GM10248 (cell line): ENCODE measurements at regions of chr1 and their contacts with region 1.

Region 1: GRCh38 chr1:33055210-33056008 is 18.7 kb upstream of the AK2 start:
- DNase-seq: peak; percentile 67
- CTCF ChIP-seq: peak; percentile 64

Region 2: GRCh38 chr1:32947669-32948389 is 107.6 kb before region 1 on chr1:
- CTCF ChIA-PET with region 1: interaction called, 20 read pairs
- POLR2A ChIA-PET with region 1: no interaction called
- DNase-seq: no peak
- CTCF ChIP-seq: no peak

Region 3: GRCh38 chr1:32977531-32978087 is 77.8 kb before region 1 on chr1:
- CTCF ChIA-PET with region 1: no interaction called
- POLR2A ChIA-PET with region 1: no interaction called
- DNase-seq: no peak
- CTCF ChIP-seq: no peak

Region 4: GRCh38 chr1:33030575-33030974 is 24.8 kb before region 1 on chr1:
- CTCF ChIA-PET with region 1: interaction called, 11 read pairs
- POLR2A ChIA-PET with region 1: no interaction called
- DNase-seq: no peak
- CTCF ChIP-seq: no peak

Region 5: DNA sequence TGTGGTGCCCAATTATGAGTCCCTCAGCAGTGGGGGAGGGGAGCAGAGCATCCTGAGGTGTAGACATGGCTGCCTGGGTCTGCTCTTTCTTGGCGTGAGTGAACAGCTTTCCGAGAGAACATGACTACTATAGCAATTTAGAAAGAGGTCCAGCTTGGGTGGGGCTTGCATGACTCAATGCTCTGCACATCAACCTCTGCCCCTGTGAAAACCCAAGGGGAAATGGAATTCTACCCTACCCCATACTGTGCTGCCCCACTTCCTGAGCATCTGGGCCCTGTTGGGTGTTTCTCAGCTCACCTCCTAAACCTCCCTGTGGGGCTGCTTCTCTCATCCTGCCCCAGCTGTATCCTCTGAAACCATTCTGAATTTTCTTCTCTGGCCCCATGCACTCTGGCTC is 17.3 kb after region 1 on chr1:
- CTCF ChIA-PET with region 1: interaction called, 15 read pairs
- POLR2A ChIA-PET with region 1: no interaction called
- DNase-seq: no peak
- CTCF ChIP-seq: no peak

Region 6: GRCh38 chr1:33086384-33086850 is 31.0 kb after region 1 on chr1:
- CTCF ChIA-PET with region 1: interaction called, 10 read pairs
- POLR2A ChIA-PET with region 1: no interaction called
- DNase-seq: peak; percentile 62
- CTCF ChIP-seq: peak; percentile 81

Region 7: DNA sequence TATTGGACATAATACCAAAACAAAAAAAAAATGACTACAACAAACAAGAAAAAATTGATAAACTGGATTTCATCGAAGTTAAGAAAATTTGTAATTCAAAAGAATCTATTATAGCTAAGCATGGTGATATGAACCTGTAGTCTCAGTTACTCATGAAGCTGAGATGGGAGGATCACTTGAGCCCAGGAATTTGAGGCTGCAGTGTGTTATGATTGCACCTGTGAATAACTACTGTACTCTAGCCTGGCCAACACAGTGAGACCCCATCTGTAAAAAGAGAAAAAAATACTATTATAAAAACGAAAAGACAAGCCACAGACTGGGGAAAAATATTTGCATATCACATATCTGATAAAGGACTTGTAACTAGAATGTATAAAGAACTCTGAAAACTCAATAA is 150.9 kb after region 1 on chr1:
- CTCF ChIA-PET with region 1: no interaction called
- POLR2A ChIA-PET with region 1: no interaction called
- DNase-seq: no peak
- CTCF ChIP-seq: no peak

Region 8: DNA sequence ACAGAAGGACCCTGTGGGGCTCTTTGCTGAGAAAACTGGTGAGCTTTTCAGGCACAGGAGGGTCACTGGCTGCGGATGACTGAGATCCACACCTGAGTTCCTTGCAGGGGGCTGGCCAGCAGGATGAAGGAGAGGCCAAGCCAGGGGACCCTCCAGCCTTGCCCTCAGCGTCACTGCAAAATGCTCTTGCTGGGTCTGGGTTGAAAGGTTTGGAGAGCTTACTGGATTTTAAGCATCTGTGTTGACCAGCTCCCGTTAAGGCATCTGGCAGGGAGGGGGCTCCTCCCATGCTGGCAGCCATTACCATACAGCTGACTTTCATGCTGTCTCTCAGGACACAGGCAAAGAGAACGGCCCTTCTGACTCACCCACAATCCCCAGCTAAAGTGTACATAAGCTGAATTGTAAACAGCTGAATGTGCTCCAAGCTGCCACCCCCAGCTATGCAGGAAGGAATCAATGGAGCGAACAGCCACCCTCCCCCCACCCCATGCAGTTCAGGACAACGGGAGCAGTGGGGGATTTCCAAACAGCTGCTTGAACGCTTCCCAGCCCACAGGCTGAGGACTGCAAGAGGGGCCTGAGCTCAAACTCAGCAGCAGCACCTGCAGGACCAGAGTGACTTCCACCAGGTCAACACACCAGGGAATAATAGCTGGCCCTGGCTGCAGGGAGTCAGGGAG is 286.8 kb after region 1 on chr1:
- CTCF ChIA-PET with region 1: no interaction called
- POLR2A ChIA-PET with region 1: no interaction called
- DNase-seq: no peak
- CTCF ChIP-seq: no peak